SK-N-SH (cell line): ENCODE measurements at regions of chr11 and their contacts with region 1.

Region 1: DNA sequence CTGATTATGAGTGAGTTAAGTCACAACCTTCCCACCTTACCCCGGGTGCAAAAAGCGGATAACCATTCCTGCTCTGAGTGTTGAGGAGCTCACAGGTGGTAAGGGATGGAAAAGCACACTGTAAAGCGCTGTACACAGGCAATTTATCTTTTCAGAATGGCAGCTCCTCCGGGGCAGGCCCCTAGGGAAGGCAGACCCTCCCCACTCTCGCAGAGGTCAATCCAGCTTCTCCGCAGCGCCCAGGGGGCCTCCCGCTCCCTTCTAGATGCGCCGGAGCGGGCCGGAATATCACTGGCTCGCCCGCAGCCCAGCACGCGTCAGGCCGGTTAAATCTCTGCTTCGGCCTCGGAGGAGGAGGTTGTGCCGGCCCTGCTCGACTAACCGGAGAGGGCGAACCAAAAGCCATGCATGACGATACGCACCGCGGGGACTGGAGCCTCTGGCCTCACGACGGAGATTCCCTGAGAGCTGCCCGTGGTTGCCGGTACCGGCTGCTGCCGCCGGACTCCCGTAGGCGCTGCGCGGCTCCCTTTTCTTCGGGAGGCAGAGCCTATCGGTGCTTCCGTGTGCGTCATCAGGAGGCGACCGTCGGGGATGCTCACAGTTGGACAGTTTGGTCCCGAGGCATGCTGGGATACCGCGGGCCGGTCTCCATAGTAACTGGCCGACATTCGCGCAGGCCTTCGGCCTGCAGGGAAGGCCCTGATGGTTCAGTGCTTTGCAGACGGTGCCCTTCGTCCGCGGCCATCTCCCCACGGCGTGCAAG is at the start of gene BRMS1:
- DNase-seq: peak; percentile 93
- H3K4me3 ChIP-seq: peak within 1 kb of the TSS; percentile 95 to 96
- H3K27ac ChIP-seq: peak within 1 kb of the TSS; percentile 72 to 85
- H3K4me1 ChIP-seq: peaks cover 24 to 37% of the 10 kb centered on the region in 2 experiments; a peak in 3 of 4 replicates
- H3K27me3 ChIP-seq: no peaks in the 10 kb centered on the region
- CTCF ChIP-seq: no peak
- EP300 ChIP-seq: no peak
- RAD21 ChIP-seq: no peak
- polyA plus RNA-seq, gene BRMS1: 70.0 and 76.5 TPM in 2 replicates

Region 2: GRCh38 chr11:66363805-66364535 is 19.2 kb after region 1 on chr11:
- CTCF ChIA-PET with region 1: interaction called, 11 read pairs
- POLR2A ChIA-PET with region 1: interaction called, 4 read pairs
- DNase-seq: peak; percentile 86
- H3K4me3 ChIP-seq: no peak overlapping the region
- H3K27ac ChIP-seq: no peak overlapping the region
- H3K4me1 ChIP-seq: peaks cover 0 to 7% of the 10 kb centered on the region in 2 experiments; a peak in 1 of 4 replicates
- H3K27me3 ChIP-seq: no peaks in the 10 kb centered on the region
- CTCF ChIP-seq: peak; percentile 73
- EP300 ChIP-seq: no peak
- RAD21 ChIP-seq: no peak